Activated CD4-positive, alpha-beta T cell treated with anti-CD3 and anti-CD28 coated beads for 36 hours (primary cell): ENCODE measurements at regions of chr20 and their contacts with region 1.

Region 1: GRCh38 chr20:45971675-45972499 is at the start of gene ZNF335:
- DNase-seq: peak; percentile 96
- ATAC-seq: peak; percentile 88
- H3K4me3 Mint-ChIP-seq: peak within 1 kb of the TSS; percentile 94
- H3K27ac Mint-ChIP-seq: peak within 1 kb of the TSS; percentile 98
- H3K4me1 Mint-ChIP-seq: peaks cover 15% of the 10 kb centered on the region
- H3K27me3 Mint-ChIP-seq: no peaks in the 10 kb centered on the region
- total RNA-seq, gene ZNF335: 27.4 to 28.9 TPM

Region 2: GRCh38 chr20:45415774-45416637 is 555.9 kb before region 1 on chr20 and contains the start of gene PIGT:
- CTCF ChIA-PET with region 1: no interaction called
- POLR2A ChIA-PET with region 1: no interaction called
- intact Hi-C with region 1: loop called in 1 of 2 experiments (anchors 5 kb)
- DNase-seq: peak; percentile 93
- ATAC-seq: peak; percentile 93
- H3K4me3 Mint-ChIP-seq: peak within 1 kb of the TSS; percentile 94
- H3K27ac Mint-ChIP-seq: peak within 1 kb of the TSS; percentile 97
- H3K4me1 Mint-ChIP-seq: peaks cover 44% of the 10 kb centered on the region
- H3K27me3 Mint-ChIP-seq: no peaks in the 10 kb centered on the region
- total RNA-seq, gene PIGT: 44.0 to 65.7 TPM

Region 3: DNA sequence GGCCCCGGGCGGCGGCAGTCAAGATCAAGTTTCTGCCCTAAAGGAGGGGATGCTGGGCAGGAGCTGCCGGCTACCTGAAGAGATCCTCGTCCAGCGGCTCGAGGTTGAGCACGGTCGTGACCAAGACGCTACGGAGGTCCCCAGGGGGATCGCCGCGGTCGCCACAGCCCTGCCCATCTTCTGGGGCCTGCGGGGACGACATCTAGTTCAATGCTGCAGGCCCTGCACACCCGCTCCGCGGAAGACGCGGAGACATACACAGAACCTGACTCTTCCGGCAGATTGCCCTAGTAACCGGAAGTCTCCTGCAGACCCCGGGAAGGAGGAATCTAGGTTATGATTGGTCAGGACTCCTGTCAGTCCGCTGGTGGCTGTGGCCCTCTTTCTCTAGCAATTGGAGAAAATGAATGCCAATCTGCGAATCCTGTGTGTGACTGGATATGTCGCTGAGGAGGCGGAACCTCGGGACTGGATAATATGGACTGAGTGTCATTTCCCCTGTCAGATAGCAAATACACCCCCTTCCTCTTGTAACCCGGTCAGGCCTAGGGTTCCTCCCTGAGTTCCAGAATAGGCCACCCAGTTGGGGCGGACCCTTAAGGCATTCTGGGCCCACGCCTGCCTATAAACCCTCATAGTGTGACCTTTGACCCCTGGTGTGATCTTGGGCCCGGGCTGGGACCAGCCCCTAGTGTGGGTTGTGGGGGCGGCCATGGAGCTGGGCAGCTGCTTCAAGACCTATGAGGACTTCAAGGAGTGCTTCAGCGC is 114.6 kb before region 1 on chr20 and contains the starts of genes ACOT8 and ZSWIM3:
- CTCF ChIA-PET with region 1: interaction called, 4 read pairs
- POLR2A ChIA-PET with region 1: interaction called, 3 read pairs
- intact Hi-C with region 1: loop called (anchors 1 kb)
- DNase-seq: peak; percentile 95
- ATAC-seq: peak; percentile 97
- H3K4me3 Mint-ChIP-seq: peak within 1 kb of the TSS; percentile 93
- H3K27ac Mint-ChIP-seq: peak within 1 kb of the TSS; percentile 99
- H3K4me1 Mint-ChIP-seq: peaks cover 38% of the 10 kb centered on the region
- H3K27me3 Mint-ChIP-seq: no peaks in the 10 kb centered on the region
- total RNA-seq, gene ACOT8: 21.9 to 22.6 TPM
- total RNA-seq, gene ZSWIM3: 4.2 to 4.8 TPM

Region 4: GRCh38 chr20:45934586-45935415 is 37.1 kb before region 1 on chr20 and contains the start of gene PCIF1:
- CTCF ChIA-PET with region 1: interaction called, 42 read pairs
- POLR2A ChIA-PET with region 1: interaction called, 45 read pairs
- intact Hi-C with region 1: loop called (anchors 1 kb)
- DNase-seq: peak; percentile 99
- ATAC-seq: peak; percentile 84
- H3K4me3 Mint-ChIP-seq: peak within 1 kb of the TSS; percentile 97
- H3K27ac Mint-ChIP-seq: peak within 1 kb of the TSS; percentile 99
- H3K4me1 Mint-ChIP-seq: peaks cover 27% of the 10 kb centered on the region
- H3K27me3 Mint-ChIP-seq: no peaks in the 10 kb centered on the region
- total RNA-seq, gene PCIF1: 24.0 to 27.4 TPM

Region 5: DNA sequence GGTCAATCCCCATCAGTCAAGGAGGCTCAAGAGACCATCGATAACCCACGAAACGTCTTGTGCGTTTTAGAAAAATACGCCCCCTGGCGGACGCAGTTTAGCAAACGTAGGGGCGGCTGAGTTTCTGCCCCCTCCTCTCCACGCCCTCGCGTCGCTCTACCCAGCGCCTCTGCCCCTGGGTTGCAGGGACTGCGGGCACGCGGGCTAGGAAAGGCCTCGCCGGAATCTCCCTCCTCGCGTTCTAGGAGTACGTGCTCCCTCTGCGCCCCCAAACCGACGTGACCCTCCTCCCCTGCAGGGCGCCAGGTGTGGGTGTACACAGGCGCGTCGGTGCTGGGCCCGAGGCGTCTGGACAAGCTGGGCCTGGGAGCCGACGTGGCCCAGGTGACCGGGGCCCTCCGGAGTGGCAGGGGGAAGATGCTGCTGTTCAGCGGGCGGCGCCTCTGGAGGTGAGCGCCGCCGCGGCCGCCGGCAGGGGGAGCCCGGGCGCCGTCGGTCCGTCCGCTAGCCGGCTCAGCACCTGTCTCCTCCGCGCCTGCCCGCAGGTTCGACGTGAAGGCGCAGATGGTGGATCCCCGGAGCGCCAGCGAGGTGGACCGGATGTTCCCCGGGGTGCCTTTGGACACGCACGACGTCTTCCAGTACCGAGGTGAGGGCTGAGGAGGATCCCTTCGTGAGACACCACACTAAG is 42.1 kb after region 1 on chr20:
- CTCF ChIA-PET with region 1: interaction called, 21 read pairs
- POLR2A ChIA-PET with region 1: interaction called, 3 read pairs
- intact Hi-C with region 1: loop called in 1 of 2 experiments (anchors 5 kb)
- DNase-seq: peak; percentile 85
- ATAC-seq: peak; percentile 88
- H3K4me3 Mint-ChIP-seq: peak overlapping the region; percentile 39
- H3K27ac Mint-ChIP-seq: no peak overlapping the region
- H3K4me1 Mint-ChIP-seq: peaks cover 51% of the 10 kb centered on the region
- H3K27me3 Mint-ChIP-seq: peaks cover 58% of the 10 kb centered on the region

Region 6: GRCh38 chr20:46400828-46401477 is 429.1 kb after region 1 on chr20:
- CTCF ChIA-PET with region 1: interaction called, 3 read pairs
- POLR2A ChIA-PET with region 1: no interaction called
- intact Hi-C with region 1: loop called (anchors 1 to 2 kb)
- DNase-seq: peak; percentile 41
- ATAC-seq: peak; percentile 87
- H3K4me3 Mint-ChIP-seq: peak overlapping the region; percentile 37
- H3K27ac Mint-ChIP-seq: peak overlapping the region; percentile 80
- H3K4me1 Mint-ChIP-seq: peaks cover 64% of the 10 kb centered on the region
- H3K27me3 Mint-ChIP-seq: no peaks in the 10 kb centered on the region